ENCODE measurements at regions of chr17 and their contacts with region 1.

Region 1: DNA sequence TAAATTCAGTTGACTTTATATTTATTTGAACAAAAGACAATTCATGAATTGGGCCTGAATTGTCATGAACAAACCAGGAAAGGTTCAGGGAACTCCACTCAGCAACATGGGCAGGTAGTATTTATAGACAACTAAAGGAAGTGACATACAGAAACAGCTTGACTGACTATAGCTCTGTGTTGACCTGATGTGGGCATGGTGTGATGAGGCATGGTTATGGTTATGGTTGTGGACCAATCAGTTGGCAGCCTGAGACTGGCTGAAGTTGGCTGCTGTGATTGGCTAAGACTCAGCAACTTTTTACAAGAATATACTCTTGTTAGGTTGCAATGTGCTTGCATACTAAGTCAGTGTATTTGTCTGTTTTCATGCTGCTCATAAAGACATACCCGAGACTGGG is 108.4 kb downstream of the HS3ST3B1 start:
- DNase-seq: no peak
- H3K4me3 ChIP-seq: no peak overlapping the region
- CTCF ChIP-seq: no peak

Region 2: DNA sequence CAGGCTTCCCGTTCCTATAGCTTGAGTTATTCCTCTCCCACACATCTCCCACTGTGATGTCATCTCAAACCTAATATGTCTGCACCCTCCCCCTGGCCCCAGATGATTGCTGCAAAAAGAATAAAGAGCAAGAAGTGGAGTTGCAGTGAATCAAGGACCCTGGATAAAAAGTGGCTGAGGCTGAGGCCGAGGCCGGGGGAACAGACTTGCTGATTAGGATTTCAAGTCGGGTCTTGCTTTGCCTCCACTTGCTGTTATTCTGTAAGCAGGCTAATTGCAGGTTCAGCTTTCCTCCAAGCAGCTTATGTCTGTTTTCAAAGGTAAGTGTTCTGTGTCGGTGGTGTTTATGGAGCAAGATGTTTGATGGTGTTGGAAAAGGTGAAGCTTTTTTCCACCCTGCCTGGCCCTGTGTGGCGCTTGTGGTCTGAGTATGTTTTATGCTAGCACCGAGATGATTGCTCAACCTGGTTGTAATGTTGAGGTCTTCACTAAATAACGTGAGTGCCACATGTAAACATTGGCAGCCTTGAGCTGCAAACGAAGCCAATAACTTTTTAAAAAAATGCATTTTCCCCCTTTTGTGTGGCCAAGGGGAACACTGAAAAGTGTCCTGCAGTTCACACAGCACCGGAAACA is 93.0 kb before region 1 on chr17:
- in situ Hi-C with region 1: loop called (anchors 5 kb)
- DNase-seq: no peak
- H3K4me3 ChIP-seq: no peak overlapping the region
- CTCF ChIP-seq: no peak

Region 3: GRCh38 chr17:14351493-14351892 is 57.8 kb before region 1 on chr17:
- in situ Hi-C with region 1: no loop called
- DNase-seq: no peak
- H3K4me3 ChIP-seq: no peak overlapping the region
- CTCF ChIP-seq: no peak

Measured in astrocyte of the cerebellum (primary cell).